Tibial artery (tissue), 4 donors: ENCODE measurements at regions of chr16 and their contacts with region 1.

Region 1: GRCh38 chr16:87636072-87636684 is 33.9 kb downstream of the JPH3 start:
- DNase-seq: peak; percentile 85 to 86
- H3K4me3 ChIP-seq: peak overlapping the region in 1 of 2 donors; percentile 11
- H3K27ac ChIP-seq: no peak overlapping the region
- H3K4me1 ChIP-seq: peaks cover 0 to 18% (median 14%) of the 10 kb centered on the region in 4 donors
- H3K27me3 ChIP-seq: peaks cover 0 to 40% of the 10 kb centered on the region in 2 donors
- CTCF ChIP-seq: peak; percentile 64 to 73

Region 2: GRCh38 chr16:87416826-87417527 is 219.2 kb before region 1 on chr16:
- intact Hi-C with region 1: loop called (anchors 5 kb)
- DNase-seq: peak; percentile 64 to 66
- H3K4me3 ChIP-seq: no peak overlapping the region
- H3K27ac ChIP-seq: no peak overlapping the region
- H3K4me1 ChIP-seq: no peaks in the 10 kb centered on the region
- H3K27me3 ChIP-seq: no peaks in the 10 kb centered on the region
- CTCF ChIP-seq: peak; percentile 62 to 76

Region 3: DNA sequence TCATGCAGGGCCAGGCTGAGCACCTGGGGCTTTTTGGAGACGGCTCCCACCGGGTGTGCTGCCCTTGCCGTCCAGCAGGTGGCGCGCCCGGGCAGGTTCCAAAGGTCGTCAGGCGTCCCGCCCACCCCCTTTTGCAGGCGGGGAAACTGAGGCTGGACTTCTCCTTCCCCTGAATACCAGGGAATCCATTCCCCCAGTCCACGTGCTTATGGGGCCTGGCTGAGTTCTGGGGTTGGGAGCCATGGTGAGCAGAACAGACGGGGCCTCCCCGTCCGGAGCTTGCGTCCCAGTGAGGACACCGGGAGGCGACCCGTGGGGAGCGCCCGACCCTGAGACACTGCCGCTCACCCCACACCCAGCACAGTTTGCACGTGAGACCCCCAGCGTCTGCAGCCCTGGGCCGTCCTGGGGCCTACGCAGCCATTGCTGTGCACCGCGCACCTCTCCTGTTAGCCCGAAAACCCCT is 85.6 kb before region 1 on chr16:
- intact Hi-C with region 1: loop called (anchors 5 kb)
- DNase-seq: no peak
- H3K4me3 ChIP-seq: no peak overlapping the region
- H3K27ac ChIP-seq: no peak overlapping the region
- H3K4me1 ChIP-seq: peaks cover 0 to 10% (median 3%) of the 10 kb centered on the region in 4 donors
- H3K27me3 ChIP-seq: no peaks in the 10 kb centered on the region
- CTCF ChIP-seq: peak; percentile 86 to 96

Region 4: GRCh38 chr16:87593710-87594258 is 42.4 kb before region 1 on chr16:
- intact Hi-C with region 1: loop called (anchors 5 kb)
- DNase-seq: no peak
- H3K4me3 ChIP-seq: no peak overlapping the region
- H3K27ac ChIP-seq: no peak overlapping the region
- H3K4me1 ChIP-seq: peaks cover 0 to 5% (median 4%) of the 10 kb centered on the region in 4 donors
- H3K27me3 ChIP-seq: peaks cover 0 to 48% of the 10 kb centered on the region in 2 donors
- CTCF ChIP-seq: no peak

Region 5: DNA sequence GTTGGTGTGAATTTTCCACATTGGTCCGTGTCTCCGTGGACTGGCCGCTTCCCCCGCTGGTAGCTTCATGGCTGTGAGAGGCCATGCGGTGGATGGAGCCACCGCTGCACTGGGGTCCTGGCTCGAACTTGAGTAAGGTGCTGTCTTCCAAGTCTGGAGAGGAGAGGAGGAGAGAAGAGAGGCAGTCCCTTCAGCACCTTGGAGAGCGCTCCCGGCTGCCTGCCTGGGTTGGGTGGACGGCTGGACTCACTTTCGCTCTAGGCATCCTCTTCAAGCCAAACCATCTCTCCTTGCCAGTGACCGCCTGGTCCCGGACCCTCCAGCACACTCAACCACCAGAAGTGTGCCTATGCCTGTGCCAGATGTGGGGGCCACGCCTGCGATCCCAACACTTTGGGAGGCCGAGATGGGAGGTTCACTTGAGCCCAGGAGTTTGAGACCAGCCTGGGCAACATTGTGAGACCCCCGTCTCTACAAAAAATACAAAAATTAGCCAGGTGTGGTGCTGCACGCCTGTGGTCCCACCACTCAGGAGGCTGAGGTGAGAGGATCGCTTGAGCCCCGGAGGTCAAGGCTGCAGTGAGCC is 27.7 kb before region 1 on chr16:
- intact Hi-C with region 1: no loop called
- DNase-seq: peak; percentile 43 to 73
- H3K4me3 ChIP-seq: no peak overlapping the region
- H3K27ac ChIP-seq: no peak overlapping the region
- H3K4me1 ChIP-seq: peaks cover 0 to 4% (median under 1%) of the 10 kb centered on the region in 4 donors
- H3K27me3 ChIP-seq: peaks cover 0 to 69% of the 10 kb centered on the region in 2 donors
- CTCF ChIP-seq: no peak